Endothelial cell of umbilical vein (primary cell): ENCODE measurements at regions of chr7 and their contacts with region 1.

Region 1: GRCh38 chr7:33895025-33895804 is 10.1 kb upstream of the BMPER start:
- DNase-seq: peak; percentile 82
- H3K4me3 ChIP-seq: no peak overlapping the region
- H3K27ac ChIP-seq: no peak overlapping the region
- H3K4me1 ChIP-seq: no peaks in the 10 kb centered on the region
- H3K27me3 ChIP-seq: no peaks in the 10 kb centered on the region
- CTCF ChIP-seq: peak; percentile 86 to 98
- POLR2A ChIP-seq: no peak

Region 2: GRCh38 chr7:33334349-33334748 is 560.9 kb before region 1 on chr7:
- CTCF ChIA-PET with region 1: interaction called, 12 read pairs
- POLR2A ChIA-PET with region 1: no interaction called
- dilution Hi-C with region 1: no loop called
- intact Hi-C with region 1: no loop called
- DNase-seq: peak; percentile 41
- H3K4me3 ChIP-seq: no peak overlapping the region
- H3K27ac ChIP-seq: no peak overlapping the region
- H3K4me1 ChIP-seq: no peaks in the 10 kb centered on the region
- H3K27me3 ChIP-seq: no peaks in the 10 kb centered on the region
- CTCF ChIP-seq: peak; percentile 20 to 52
- POLR2A ChIP-seq: no peak

Region 3: GRCh38 chr7:33423646-33424020 is 471.6 kb before region 1 on chr7:
- CTCF ChIA-PET with region 1: interaction called, 11 read pairs
- POLR2A ChIA-PET with region 1: no interaction called
- dilution Hi-C with region 1: no loop called
- intact Hi-C with region 1: loop called (anchors 10 kb)
- DNase-seq: peak; percentile 15
- H3K4me3 ChIP-seq: no peak overlapping the region
- H3K27ac ChIP-seq: no peak overlapping the region
- H3K4me1 ChIP-seq: no peaks in the 10 kb centered on the region
- H3K27me3 ChIP-seq: no peaks in the 10 kb centered on the region
- CTCF ChIP-seq: peak; percentile 16 to 27
- POLR2A ChIP-seq: no peak

Region 4: DNA sequence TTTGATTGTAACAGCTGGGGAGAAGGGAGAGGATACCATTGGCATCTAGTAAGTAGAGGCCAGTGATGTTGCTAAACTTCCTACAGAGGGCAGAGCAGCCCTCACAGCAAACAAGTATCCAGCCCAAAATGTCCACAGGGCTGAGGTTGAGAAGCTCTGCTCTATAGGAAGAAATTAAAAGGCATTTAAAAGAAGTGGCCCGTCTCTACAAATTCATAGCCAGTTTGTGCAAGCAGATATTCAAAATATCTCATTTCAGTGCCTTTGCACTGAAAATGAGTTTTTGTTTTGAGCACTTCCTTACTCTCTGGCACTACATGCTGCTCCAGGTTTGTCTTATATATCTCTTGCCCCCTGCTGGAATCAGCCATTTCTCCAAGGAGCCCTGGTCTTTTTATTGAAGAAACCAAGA is 435.9 kb before region 1 on chr7:
- CTCF ChIA-PET with region 1: interaction called, 8 read pairs
- POLR2A ChIA-PET with region 1: no interaction called
- dilution Hi-C with region 1: no loop called
- intact Hi-C with region 1: loop called (anchors 1 kb)
- DNase-seq: peak; percentile 74
- H3K4me3 ChIP-seq: no peak overlapping the region
- H3K27ac ChIP-seq: no peak overlapping the region
- H3K4me1 ChIP-seq: no peaks in the 10 kb centered on the region
- H3K27me3 ChIP-seq: no peaks in the 10 kb centered on the region
- CTCF ChIP-seq: peak; percentile 38 to 59
- POLR2A ChIP-seq: no peak

Region 5: DNA sequence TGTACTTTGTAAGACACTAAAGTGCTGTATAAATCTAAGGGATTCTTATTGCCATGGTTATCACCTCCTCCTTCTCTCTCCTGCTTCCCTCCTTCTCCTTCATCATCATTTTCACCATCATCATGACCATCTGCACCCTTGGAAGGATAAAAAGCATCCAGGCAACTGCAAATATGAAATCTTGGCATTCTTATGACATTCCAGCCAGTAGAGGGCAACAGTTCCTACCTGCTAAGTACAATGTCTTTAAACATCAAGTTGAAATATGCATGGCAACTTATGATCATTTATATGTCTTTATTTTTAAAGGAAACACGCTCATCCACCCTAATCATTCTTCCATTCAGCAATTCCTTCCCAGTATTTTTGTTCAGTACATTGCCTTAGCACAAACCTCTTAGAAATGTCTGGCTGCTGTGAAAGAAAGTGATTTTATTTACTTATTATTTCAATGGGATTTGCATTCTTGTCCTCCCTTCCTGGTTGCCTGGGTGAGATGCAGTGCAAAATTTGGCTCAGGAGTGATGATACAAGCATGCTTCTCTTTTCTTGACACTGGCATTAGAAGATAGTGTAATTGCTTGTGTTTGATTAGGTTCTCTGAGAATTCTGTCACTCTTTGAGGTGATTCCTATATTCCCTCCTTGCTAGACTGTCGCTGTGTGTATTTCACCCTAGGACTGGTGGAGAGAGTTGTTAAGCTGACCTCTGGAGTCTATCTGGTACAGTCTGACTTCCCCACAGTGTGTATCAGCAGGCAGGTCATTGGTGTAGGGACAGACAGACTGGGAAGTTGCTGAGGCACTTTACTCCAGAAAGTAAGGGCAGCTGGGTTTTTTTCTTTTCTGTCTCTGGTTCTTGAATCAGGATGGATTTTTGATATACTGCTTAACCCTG is 178.4 kb before region 1 on chr7:
- CTCF ChIA-PET with region 1: interaction called, 14 read pairs
- POLR2A ChIA-PET with region 1: no interaction called
- dilution Hi-C with region 1: no loop called
- intact Hi-C with region 1: loop called (anchors 2 kb)
- DNase-seq: peak; percentile 84
- H3K4me3 ChIP-seq: no peak overlapping the region
- H3K27ac ChIP-seq: no peak overlapping the region
- H3K4me1 ChIP-seq: peaks cover 9% of the 10 kb centered on the region
- H3K27me3 ChIP-seq: no peaks in the 10 kb centered on the region
- CTCF ChIP-seq: peak; percentile 61 to 68
- POLR2A ChIP-seq: no peak

Region 6: GRCh38 chr7:33757562-33758165 is 137.6 kb before region 1 on chr7:
- CTCF ChIA-PET with region 1: interaction called, 43 read pairs
- POLR2A ChIA-PET with region 1: no interaction called
- dilution Hi-C with region 1: no loop called
- intact Hi-C with region 1: loop called (anchors 1 kb)
- DNase-seq: peak; percentile 58
- H3K4me3 ChIP-seq: no peak overlapping the region
- H3K27ac ChIP-seq: no peak overlapping the region
- H3K4me1 ChIP-seq: peaks cover 8% of the 10 kb centered on the region
- H3K27me3 ChIP-seq: no peaks in the 10 kb centered on the region
- CTCF ChIP-seq: peak; percentile 31 to 35
- POLR2A ChIP-seq: no peak

Region 7: DNA sequence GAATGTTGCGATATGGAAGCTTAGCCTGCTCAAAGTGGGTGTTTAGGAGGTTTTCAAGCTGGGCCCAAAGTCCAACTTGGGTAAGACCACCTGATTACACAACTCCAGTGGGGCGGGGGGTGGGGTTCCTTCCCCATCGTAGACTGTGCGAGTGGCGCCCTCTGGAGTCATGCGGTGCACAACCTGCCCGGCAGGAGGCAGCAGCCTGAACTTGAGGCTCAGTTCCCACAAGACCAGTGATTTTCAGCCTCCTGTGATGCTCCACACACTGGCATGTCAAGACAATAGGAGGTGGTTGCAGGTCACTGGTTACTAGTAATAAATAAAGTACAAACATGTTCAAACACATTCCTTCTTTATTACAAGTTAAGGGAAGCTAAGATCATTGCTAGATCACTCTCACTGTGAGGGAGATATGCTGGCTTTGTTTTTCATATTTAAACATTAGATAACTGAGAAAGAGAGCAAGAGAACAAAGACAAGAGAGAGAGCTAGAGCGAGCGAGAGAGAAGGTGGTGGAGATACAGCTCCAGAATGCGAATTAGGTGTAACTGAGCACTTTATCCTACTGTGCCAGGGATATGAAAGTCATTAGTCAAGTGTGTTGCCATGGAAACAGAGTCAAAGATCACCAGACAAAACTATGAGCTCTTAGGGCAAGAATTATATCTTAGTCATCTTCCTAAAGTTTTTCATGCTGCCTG is 87.3 kb before region 1 on chr7:
- CTCF ChIA-PET with region 1: interaction called, 11 read pairs
- POLR2A ChIA-PET with region 1: no interaction called
- dilution Hi-C with region 1: no loop called
- intact Hi-C with region 1: no loop called
- DNase-seq: peak; percentile 91
- H3K4me3 ChIP-seq: no peak overlapping the region
- H3K27ac ChIP-seq: peak overlapping the region; percentile 81
- H3K4me1 ChIP-seq: peaks cover 27% of the 10 kb centered on the region
- H3K27me3 ChIP-seq: no peaks in the 10 kb centered on the region
- CTCF ChIP-seq: peak; percentile 62 to 66
- POLR2A ChIP-seq: no peak

Region 8: DNA sequence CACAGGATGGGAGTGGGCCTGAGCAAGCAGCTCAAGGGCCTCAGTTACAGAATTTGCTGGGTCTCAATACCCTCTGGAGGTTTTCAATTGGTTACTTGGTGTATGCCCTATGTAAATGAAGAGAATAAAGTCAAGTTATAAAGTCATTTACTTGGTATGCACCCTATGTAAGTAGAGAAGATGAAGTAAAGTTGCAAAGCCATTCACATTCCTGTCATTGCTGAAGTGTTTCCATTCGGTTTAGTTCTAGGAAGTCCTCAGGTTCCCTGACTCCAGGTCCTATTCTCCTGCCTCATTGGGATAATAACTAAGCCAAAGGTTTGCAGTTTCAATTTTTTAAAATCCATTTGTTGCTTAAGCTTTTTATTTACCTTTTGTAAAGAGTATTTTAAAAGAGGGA is 490.2 kb after region 1 on chr7:
- CTCF ChIA-PET with region 1: no interaction called
- POLR2A ChIA-PET with region 1: no interaction called
- dilution Hi-C with region 1: no loop called
- intact Hi-C with region 1: no loop called
- DNase-seq: no peak
- H3K4me3 ChIP-seq: no peak overlapping the region
- H3K27ac ChIP-seq: no peak overlapping the region
- H3K4me1 ChIP-seq: no peaks in the 10 kb centered on the region
- H3K27me3 ChIP-seq: no peaks in the 10 kb centered on the region
- CTCF ChIP-seq: no peak
- POLR2A ChIP-seq: no peak